HepG2 (cell line): ENCODE measurements at regions of chr14 and their contacts with region 1.

Region 1: DNA sequence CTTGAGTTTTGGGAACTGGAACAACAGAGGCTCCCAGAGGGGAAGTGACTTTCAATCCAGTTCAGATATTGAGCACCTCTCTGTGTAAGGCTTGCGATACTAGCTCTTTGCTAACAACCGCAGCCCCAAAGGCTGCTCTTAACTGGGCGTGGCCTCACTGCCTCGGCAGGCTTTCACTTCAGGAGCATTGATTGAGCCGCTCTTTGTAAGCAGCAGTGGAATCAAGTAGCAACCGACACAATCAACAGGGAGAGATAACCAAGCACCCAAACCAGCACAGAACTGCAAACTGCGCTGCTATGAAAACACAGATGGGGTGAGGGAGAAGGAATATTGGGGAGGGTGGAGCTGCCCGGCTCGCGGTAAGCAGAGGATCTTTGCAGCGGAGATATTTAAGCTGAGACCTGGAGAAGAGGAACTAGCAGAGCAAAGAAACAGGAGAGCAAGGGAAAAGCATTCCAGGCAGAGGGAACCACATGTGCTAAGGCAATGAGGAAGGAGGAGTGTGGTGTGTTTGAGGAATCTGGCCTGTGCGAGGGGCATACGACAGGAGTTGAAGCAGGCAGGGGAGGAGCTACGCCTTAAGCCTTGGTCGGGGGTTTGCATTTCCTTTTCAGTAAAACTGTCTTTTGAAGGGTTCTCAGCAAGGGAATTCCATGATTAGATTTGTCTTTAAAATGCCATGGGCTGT is 17.3 kb upstream of the YY1 start:
- DNase-seq: peak; percentile 77
- ATAC-seq: peak; percentile 84
- H3K4me3 ChIP-seq: peak overlapping the region; percentile 77 to 81 (median 77)
- H3K27ac ChIP-seq: peak overlapping the region; percentile 68
- H3K4me1 ChIP-seq: peaks cover 36% of the 10 kb centered on the region
- H3K27me3 ChIP-seq: no peaks in the 10 kb centered on the region; a peak in 1 of 5 replicates
- CTCF ChIP-seq: no peak
- EP300 ChIP-seq: no peak
- POLR2A ChIP-seq: peak; percentile 29 to 48; a peak in 1 of 4 replicates
- RAD21 ChIP-seq: no peak

Region 2: DNA sequence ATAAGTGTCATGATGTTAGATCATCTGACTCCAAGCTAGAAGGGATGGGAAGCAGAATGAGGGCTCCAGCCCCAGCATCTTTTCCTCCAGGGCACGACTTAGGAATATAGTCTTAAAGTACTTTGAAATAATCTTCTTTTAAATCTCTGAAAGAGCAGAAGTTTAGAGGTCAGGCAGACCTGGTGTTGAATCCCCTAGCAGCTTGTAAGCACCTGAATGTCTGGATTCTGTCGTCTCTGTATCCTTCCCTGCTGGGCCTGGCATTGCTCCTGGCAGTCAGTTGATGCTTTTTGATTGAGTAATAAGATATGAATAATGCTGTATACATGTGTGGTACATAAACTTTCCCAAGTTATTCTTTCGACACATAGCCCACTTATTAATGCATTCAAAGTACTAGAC is 125.1 kb before region 1 on chr14:
- CTCF ChIA-PET with region 1: no interaction called
- POLR2A ChIA-PET with region 1: no interaction called
- in situ Hi-C with region 1: no loop called
- intact Hi-C with region 1: no loop called
- DNase-seq: no peak
- ATAC-seq: no peak
- H3K4me3 ChIP-seq: no peak overlapping the region
- H3K27ac ChIP-seq: no peak overlapping the region
- H3K4me1 ChIP-seq: peaks cover 7% of the 10 kb centered on the region; the same call in 1 of the 2 replicates
- H3K27me3 ChIP-seq: no peaks in the 10 kb centered on the region
- CTCF ChIP-seq: no peak
- EP300 ChIP-seq: no peak
- POLR2A ChIP-seq: no peak
- RAD21 ChIP-seq: no peak

Region 3: GRCh38 chr14:100173353-100173752 is 48.3 kb before region 1 on chr14:
- CTCF ChIA-PET with region 1: no interaction called
- POLR2A ChIA-PET with region 1: no interaction called
- in situ Hi-C with region 1: no loop called
- intact Hi-C with region 1: no loop called
- DNase-seq: no peak
- ATAC-seq: no peak
- H3K4me3 ChIP-seq: no peak overlapping the region
- H3K27ac ChIP-seq: no peak overlapping the region
- H3K4me1 ChIP-seq: peaks cover 22% of the 10 kb centered on the region
- H3K27me3 ChIP-seq: peaks cover 1 to 7% of the 10 kb centered on the region in 2 experiments; a peak in 3 of 5 replicates
- CTCF ChIP-seq: peak; percentile 13; the same call in 1 of the 2 replicates
- EP300 ChIP-seq: no peak
- POLR2A ChIP-seq: no peak
- RAD21 ChIP-seq: no peak

Region 4: DNA sequence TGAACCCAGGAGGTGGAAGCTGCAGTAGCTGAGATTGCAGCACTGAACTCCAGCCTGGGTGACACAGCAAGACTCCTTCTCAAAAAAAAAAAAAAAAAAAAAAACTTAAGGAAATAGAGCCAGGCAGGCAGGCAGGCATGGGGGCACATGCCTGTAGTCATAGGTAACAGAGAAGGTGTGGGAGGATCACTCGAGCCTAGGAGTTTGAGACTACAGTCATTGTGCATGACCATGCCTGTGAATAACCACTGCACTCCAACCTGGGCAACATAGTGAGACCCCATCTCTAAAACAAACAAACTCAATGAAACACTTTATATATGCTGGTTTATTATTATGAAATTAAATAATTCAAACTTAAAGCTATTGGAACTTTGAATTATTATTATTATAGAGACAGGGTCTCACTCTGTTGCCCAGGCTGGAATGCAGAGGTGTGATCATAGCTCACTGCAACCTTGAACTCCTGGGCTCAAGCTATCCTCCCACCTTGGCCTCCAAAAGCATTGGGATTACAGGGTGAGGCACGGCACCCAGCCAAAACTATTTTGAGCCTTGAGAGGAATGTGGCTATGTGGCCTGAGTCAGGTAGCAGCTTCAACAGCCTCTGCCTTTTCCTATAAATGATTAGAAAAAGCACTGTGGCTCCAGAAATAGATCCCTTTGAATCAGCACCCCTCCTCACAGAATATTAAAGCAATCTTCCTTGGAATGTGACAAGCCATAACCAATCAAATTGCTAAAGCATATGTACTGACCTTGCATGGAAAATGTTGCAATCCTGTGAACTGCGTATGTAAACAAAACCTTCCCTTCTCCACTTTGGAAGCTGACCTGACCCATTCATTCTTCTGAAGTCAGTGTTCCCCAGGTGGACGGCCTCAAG is 17.5 kb before region 1 on chr14:
- CTCF ChIA-PET with region 1: no interaction called
- POLR2A ChIA-PET with region 1: interaction called, 48 read pairs
- in situ Hi-C with region 1: no loop called
- intact Hi-C with region 1: no loop called
- DNase-seq: peak; percentile 96
- ATAC-seq: peak; percentile 89
- H3K4me3 ChIP-seq: no peak overlapping the region; a peak in 1 of 6 replicates
- H3K27ac ChIP-seq: peak overlapping the region; percentile 59
- H3K4me1 ChIP-seq: peaks cover 50% of the 10 kb centered on the region
- H3K27me3 ChIP-seq: no peaks in the 10 kb centered on the region
- CTCF ChIP-seq: peak; percentile 11; the same call in 1 of the 2 replicates
- EP300 ChIP-seq: peak in 1 of 2 experiments; percentile 79; a peak in 2 of 4 replicates
- POLR2A ChIP-seq: no peak
- RAD21 ChIP-seq: no peak

Region 5: DNA sequence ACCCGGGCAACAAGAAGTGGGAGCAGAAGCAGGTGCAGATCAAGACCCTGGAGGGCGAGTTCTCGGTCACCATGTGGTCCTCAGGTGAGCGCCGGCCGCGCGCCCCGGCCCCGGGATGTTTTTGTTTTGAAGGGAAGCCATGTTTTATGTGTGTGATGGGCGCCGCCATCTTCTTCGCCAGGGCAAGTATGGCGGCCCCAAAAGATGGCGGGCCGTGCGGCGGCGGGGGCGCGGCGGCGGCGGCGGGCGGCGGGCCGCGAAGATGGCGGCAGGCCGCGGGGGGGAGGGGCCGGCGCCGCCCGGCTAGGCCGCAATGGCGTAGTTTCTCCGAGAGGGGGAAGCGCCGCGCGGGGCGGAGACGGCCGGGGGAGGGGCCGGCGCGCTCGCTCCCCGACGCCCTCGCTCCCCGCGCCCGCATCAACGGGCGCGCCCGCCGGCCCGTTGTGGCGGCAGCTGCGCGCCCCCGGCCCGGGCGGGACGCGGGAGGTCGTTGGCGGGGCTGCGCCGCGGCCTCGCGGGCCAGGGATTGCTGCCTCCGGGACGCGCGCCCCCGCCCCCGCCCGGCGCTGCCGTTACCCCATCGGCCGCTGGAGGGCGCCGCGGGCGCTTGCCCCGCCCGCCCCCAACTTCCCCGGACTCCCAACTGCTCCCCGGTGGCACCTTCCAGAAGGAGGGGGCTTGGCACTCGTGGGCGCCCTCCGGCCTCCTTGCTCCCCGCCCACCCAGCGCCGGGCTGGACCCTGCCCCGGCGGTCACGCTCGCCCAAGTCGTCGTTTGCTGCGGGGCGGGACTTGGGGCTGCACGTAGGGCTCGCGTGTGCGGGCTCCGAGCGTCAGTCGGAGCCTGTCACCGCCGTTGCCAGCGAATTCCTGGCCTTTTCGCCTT is 18.4 kb after region 1 on chr14:
- CTCF ChIA-PET with region 1: no interaction called
- POLR2A ChIA-PET with region 1: interaction called, 64 read pairs
- in situ Hi-C with region 1: no loop called
- intact Hi-C with region 1: loop called (anchors 2 kb)
- DNase-seq: peak; percentile 75
- ATAC-seq: peak; percentile 78
- H3K4me3 ChIP-seq: peak overlapping the region; percentile 69 to 98 (median 96)
- H3K27ac ChIP-seq: peak overlapping the region; percentile 85
- H3K4me1 ChIP-seq: peaks cover 62% of the 10 kb centered on the region
- H3K27me3 ChIP-seq: no peaks in the 10 kb centered on the region; a peak in 1 of 5 replicates
- CTCF ChIP-seq: peak; percentile 67
- EP300 ChIP-seq: no peak
- POLR2A ChIP-seq: peak; percentile 56
- RAD21 ChIP-seq: no peak

Region 6: GRCh38 chr14:100540141-100540925 is 318.7 kb after region 1 on chr14:
- CTCF ChIA-PET with region 1: no interaction called
- POLR2A ChIA-PET with region 1: no interaction called
- in situ Hi-C with region 1: no loop called
- intact Hi-C with region 1: no loop called
- DNase-seq: peak; percentile 31
- ATAC-seq: peak; percentile 90
- H3K4me3 ChIP-seq: no peak overlapping the region
- H3K27ac ChIP-seq: no peak overlapping the region
- H3K4me1 ChIP-seq: no peaks in the 10 kb centered on the region
- H3K27me3 ChIP-seq: peaks cover 8 to 51% of the 10 kb centered on the region in 2 experiments
- CTCF ChIP-seq: peak; percentile 63
- EP300 ChIP-seq: no peak
- POLR2A ChIP-seq: no peak
- RAD21 ChIP-seq: peak; percentile 68